HCT116 (cell line): ENCODE measurements at regions of chr20 and their contacts with region 1.

Region 1: DNA sequence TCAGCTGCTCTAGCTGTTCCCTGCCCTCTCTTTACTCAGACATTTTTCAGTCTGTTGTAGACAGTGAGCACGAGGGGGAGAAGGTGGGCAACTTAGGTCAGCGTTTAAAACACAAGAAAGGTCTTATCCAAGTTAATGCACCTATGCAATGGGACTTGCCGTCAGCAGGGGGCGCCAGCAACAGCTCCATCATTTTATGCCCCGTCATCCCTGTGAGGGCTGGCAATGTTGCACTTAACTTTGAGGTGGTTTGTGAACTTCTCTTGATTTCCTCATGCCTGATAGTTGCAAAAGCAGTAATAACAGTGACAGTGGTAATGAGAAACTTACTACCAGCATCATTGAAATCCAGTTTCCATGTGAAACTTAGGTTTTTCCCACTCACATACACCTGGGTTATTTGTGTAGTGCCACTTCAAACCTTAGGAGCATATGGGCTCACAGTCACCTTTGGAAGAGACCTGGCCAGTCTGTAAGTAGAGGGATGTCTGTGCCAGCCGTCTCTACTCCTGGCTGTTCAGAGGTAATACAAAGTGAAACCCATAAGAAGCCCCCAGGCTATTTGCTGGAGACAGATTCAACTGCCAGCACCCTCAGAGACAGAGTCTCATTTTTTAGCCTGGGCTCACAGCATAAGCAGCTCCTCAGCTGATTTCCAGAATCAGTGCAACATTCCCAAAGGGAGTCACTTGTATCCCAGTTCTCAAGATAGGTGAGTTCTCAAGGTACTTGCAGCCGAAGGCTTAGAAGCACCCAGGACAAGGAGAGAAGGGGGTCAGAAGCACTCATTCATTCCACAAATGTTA is 44.8 kb upstream of the ID1 start:
- DNase-seq: peak; percentile 59
- ATAC-seq: peak; percentile 52
- H3K4me3 ChIP-seq: 0 out of 4 replicates have a peak overlapping the region, but pooled peaks of 1 of the 2 experiments have one; percentile 22
- H3K27ac ChIP-seq: peak overlapping the region; percentile 93
- H3K4me1 ChIP-seq: peaks cover 74 to 83% of the 10 kb centered on the region in 2 experiments
- H3K27me3 ChIP-seq: no peaks in the 10 kb centered on the region
- CTCF ChIP-seq: peak in 2 of 3 experiments; percentile 89 to 97; a peak in 4 of 6 replicates
- POLR2A ChIP-seq: no peak
- RAD21 ChIP-seq: no peak

Region 2: DNA sequence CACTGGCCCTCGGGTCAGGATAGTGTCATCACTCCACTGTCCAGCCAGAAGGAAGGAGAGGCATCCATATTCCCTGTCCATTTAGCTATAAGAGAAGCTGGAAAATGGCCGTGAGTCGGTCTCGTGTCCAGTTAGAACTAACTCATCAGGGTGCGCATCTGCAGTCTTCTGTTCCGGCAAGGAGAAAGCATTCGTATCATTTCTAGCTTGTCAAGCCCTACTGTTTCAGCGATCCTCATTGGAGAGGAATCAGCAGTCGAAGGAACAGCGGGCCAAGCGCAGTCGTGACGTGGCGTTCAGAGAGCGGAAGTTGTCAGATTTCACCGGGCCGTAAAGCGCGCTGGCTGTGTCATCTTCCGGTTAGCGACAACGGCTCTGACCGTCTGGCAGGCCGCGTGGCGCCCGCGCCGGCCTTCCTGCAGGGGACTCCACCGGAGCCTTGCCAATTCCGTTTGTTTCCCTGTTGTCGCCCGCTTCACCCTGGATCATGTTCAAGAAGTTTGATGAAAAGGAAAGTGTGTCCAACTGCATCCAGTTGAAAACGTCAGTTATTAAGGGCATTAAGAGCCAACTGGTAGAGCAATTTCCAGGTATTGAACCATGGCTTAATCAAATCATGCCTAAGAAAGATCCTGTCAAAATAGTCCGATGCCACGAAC is 13.2 kb before region 1 on chr20:
- CTCF ChIA-PET with region 1: interaction called, 11 read pairs
- POLR2A ChIA-PET with region 1: interaction called, 9 read pairs
- RAD21 ChIA-PET with region 1: interaction called in 1 of 2 experiments, 6 read pairs
- intact Hi-C with region 1: no loop called
- DNase-seq: peak; percentile 83
- ATAC-seq: peak; percentile 73
- H3K4me3 ChIP-seq: peak overlapping the region; percentile 67 to 78
- H3K27ac ChIP-seq: peak overlapping the region; percentile 72
- H3K4me1 ChIP-seq: peaks cover 0 to 29% of the 10 kb centered on the region in 2 experiments; a peak in 3 of 4 replicates
- H3K27me3 ChIP-seq: no peaks in the 10 kb centered on the region
- CTCF ChIP-seq: peak in 2 of 3 experiments; percentile 35 to 47; a peak in 4 of 6 replicates
- POLR2A ChIP-seq: peak; percentile 45
- RAD21 ChIP-seq: no peak

Region 3: DNA sequence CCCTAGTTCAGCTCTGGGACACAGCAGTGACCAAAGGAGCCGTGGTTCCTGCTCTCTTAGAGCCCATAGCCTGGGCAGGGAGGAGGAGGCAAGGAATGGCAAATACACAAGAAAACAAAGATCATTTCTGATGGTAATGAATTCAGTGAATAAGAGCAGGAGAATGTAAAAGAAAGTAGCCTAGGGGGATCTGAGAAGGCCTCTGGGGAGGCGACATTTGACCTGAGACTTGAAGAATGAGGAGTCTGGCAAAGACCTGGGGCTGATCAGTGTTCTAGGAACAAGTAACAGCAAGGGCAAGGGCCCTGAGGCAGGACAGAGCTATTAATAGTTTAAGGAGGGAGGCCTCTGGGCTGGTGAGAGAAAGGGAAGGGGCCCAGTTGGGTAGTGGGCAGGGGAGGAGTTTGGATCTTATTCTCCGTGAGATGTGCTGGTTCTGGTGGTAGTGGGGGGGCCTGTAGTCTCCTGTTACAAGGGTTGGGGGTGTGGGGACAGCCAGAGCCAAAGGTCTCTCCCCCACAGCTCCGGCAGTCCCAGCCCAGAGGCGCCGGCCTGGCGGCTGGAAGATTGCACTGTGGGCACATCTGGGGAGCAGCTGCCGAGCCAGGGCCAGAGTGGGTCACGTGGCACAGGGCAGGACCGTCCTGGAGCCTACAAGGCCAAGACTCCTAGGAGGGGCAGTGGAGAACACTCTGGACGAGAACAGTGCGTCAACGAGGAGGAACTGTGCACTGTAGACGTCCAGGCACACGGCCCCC is 35.5 kb after region 1 on chr20:
- CTCF ChIA-PET with region 1: interaction called, 8 read pairs
- POLR2A ChIA-PET with region 1: interaction called, 1,106 read pairs
- RAD21 ChIA-PET with region 1: interaction called, 3 to 4 read pairs
- intact Hi-C with region 1: no loop called
- DNase-seq: peak; percentile 57
- ATAC-seq: peak; percentile 61
- H3K4me3 ChIP-seq: peak overlapping the region; percentile 51 to 58
- H3K27ac ChIP-seq: peak overlapping the region; percentile 98
- H3K4me1 ChIP-seq: peaks cover 61 to 80% of the 10 kb centered on the region in 2 experiments
- H3K27me3 ChIP-seq: no peaks in the 10 kb centered on the region
- CTCF ChIP-seq: no peak
- POLR2A ChIP-seq: peak; percentile 53
- RAD21 ChIP-seq: no peak

Region 4: GRCh38 chr20:31630187-31630790 is 70.0 kb after region 1 on chr20:
- CTCF ChIA-PET with region 1: interaction called, 15 read pairs
- POLR2A ChIA-PET with region 1: interaction called, 3 read pairs
- RAD21 ChIA-PET with region 1: interaction called in 1 of 2 experiments, 7 read pairs
- intact Hi-C with region 1: no loop called
- DNase-seq: no peak
- ATAC-seq: no peak
- H3K4me3 ChIP-seq: no peak overlapping the region
- H3K27ac ChIP-seq: no peak overlapping the region
- H3K4me1 ChIP-seq: peaks cover 0 to 6% of the 10 kb centered on the region in 2 experiments; a peak in 1 of 4 replicates
- H3K27me3 ChIP-seq: no peaks in the 10 kb centered on the region
- CTCF ChIP-seq: no peak
- POLR2A ChIP-seq: no peak
- RAD21 ChIP-seq: no peak

Region 5: DNA sequence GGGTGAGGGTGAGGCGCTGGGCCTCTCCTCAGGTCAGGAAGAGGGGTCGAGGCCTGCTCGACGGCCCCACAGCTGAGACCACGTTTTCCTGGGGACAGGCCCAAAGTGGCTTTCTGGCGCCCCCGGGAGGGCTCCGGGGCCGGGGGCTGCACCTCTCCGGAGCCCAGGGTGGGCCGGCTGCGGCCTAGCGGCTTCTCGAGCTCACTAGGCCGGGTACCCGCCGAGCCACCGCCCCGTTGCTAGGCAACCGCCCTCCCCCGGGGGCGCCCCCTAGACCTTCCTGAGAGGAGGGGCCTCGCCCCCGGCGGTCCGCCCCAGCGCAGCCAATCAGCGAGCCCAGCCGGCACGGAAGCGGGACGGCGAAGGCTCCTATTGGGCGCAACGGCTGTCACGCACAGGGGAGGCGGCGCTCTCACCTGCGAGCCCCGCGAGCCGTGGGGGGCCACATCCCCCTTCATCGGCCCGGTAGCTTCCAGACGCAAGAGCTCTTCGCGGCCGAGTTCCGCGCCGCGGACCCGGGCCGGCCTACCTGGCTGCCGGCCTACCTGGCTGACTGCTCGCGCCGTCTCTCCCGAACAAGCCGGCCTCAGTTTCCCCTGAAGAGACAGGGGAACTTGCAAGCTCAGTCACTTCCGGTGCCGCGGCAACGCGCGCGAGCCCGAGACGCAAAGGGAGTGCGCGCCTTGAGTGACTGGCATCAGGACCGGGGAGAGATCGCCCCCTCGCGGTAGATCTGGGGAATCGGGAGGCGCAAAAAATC is 163.2 kb after region 1 on chr20:
- CTCF ChIA-PET with region 1: interaction called, 15 read pairs
- POLR2A ChIA-PET with region 1: interaction called, 6 read pairs
- RAD21 ChIA-PET with region 1: interaction called in 1 of 2 experiments, 5 read pairs
- intact Hi-C with region 1: loop called (anchors 5 kb)
- DNase-seq: peak; percentile 95
- ATAC-seq: peak; percentile 84
- H3K4me3 ChIP-seq: peak overlapping the region; percentile 82 to 87
- H3K27ac ChIP-seq: peak overlapping the region; percentile 98
- H3K4me1 ChIP-seq: peaks cover 43 to 73% of the 10 kb centered on the region in 2 experiments
- H3K27me3 ChIP-seq: no peaks in the 10 kb centered on the region
- CTCF ChIP-seq: peak in 2 of 3 experiments; percentile 89 to 91; a peak in 4 of 6 replicates
- POLR2A ChIP-seq: peak; percentile 67
- RAD21 ChIP-seq: no peak

Region 6: GRCh38 chr20:32652739-32653526 is 1092.6 kb after region 1 on chr20:
- CTCF ChIA-PET with region 1: no interaction called
- POLR2A ChIA-PET with region 1: no interaction called
- RAD21 ChIA-PET with region 1: no interaction called
- intact Hi-C with region 1: no loop called
- DNase-seq: peak; percentile 54
- ATAC-seq: peak; percentile 96
- H3K4me3 ChIP-seq: no peak overlapping the region
- H3K27ac ChIP-seq: no peak overlapping the region
- H3K4me1 ChIP-seq: peaks cover 0 to 11% of the 10 kb centered on the region in 2 experiments; a peak in 1 of 4 replicates
- H3K27me3 ChIP-seq: no peaks in the 10 kb centered on the region
- CTCF ChIP-seq: peak; percentile 87 to 91 (median 88)
- POLR2A ChIP-seq: no peak
- RAD21 ChIP-seq: peak; percentile 99